ENCODE measurements at regions of chr6 and their contacts with region 1.

Region 1: GRCh38 chr6:125779924-125780539 is 10.7 kb upstream of the NCOA7 start:
- DNase-seq: peak; percentile 95
- ATAC-seq: peak; percentile 83
- H3K4me3 ChIP-seq: peak overlapping the region; percentile 67 to 100 (median 84)
- H3K4me3 Mint-ChIP-seq: no peak overlapping the region
- H3K27ac ChIP-seq: peak overlapping the region; percentile 81 to 95
- H3K27ac Mint-ChIP-seq: no peak overlapping the region
- H3K4me1 ChIP-seq: peaks cover 5 to 6% of the 10 kb centered on the region in 2 donors
- H3K4me1 Mint-ChIP-seq: peaks cover 11% of the 10 kb centered on the region
- H3K27me3 ChIP-seq: no peaks in the 10 kb centered on the region
- H3K27me3 Mint-ChIP-seq: peaks cover 5% of the 10 kb centered on the region
- CTCF ChIP-seq: peak; percentile 37

Region 2: GRCh38 chr6:125623085-125623484 is 156.9 kb before region 1 on chr6:
- CTCF ChIA-PET with region 1: no interaction called
- POLR2A ChIA-PET with region 1: no interaction called
- intact Hi-C with region 1: no loop called
- DNase-seq: no peak
- ATAC-seq: no peak
- H3K4me3 ChIP-seq: no peak overlapping the region
- H3K4me3 Mint-ChIP-seq: no peak overlapping the region
- H3K27ac ChIP-seq: no peak overlapping the region
- H3K27ac Mint-ChIP-seq: no peak overlapping the region
- H3K4me1 ChIP-seq: no peaks in the 10 kb centered on the region
- H3K4me1 Mint-ChIP-seq: no peaks in the 10 kb centered on the region
- H3K27me3 ChIP-seq: peaks cover 0 to 3% (median 0%) of the 10 kb centered on the region in 4 experiments
- H3K27me3 Mint-ChIP-seq: peaks cover 39% of the 10 kb centered on the region
- CTCF ChIP-seq: no peak

Region 3: DNA sequence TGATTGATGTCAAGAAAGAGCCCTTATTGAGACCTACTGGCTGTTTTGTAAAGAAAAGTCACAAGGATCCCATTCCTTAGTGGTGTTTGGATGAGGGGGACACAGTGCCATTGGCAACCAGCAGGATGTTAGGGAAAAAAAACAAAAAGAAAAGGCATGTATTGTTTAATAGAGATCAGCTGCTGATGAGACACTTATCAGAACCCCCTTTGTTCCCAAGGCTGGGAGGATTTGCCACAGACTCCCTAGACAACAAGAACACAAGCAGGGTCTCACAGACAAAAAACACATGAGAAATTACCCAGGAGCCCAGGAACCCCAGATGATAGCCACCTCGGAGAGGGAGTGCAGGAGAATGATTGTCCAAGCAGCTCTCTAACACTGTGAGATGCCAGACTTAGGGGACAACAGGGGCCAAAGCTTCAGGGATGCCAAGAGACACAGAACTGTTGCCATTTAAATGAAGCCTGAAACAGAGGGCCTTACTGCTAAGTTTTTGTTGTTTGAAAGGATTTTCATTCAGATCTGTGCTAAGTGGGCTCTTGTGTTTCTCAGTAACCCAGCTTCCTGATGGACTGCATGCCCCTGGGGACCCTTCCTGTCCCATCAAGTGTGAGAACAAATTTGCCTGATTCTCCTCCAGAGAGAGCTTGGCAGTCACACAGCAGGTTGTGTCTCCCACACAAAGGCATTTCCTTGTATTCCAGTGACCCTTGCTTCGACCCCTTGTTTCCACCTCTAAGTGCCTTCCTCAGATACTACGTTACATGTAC is 79.3 kb before region 1 on chr6:
- CTCF ChIA-PET with region 1: no interaction called
- POLR2A ChIA-PET with region 1: no interaction called
- intact Hi-C with region 1: no loop called
- DNase-seq: no peak
- ATAC-seq: no peak
- H3K4me3 ChIP-seq: no peak overlapping the region
- H3K4me3 Mint-ChIP-seq: no peak overlapping the region
- H3K27ac ChIP-seq: no peak overlapping the region
- H3K27ac Mint-ChIP-seq: no peak overlapping the region
- H3K4me1 ChIP-seq: peaks cover 0 to 3% of the 10 kb centered on the region in 2 donors
- H3K4me1 Mint-ChIP-seq: peaks cover 4% of the 10 kb centered on the region
- H3K27me3 ChIP-seq: no peaks in the 10 kb centered on the region
- H3K27me3 Mint-ChIP-seq: peaks cover 6% of the 10 kb centered on the region
- CTCF ChIP-seq: no peak

Region 4: DNA sequence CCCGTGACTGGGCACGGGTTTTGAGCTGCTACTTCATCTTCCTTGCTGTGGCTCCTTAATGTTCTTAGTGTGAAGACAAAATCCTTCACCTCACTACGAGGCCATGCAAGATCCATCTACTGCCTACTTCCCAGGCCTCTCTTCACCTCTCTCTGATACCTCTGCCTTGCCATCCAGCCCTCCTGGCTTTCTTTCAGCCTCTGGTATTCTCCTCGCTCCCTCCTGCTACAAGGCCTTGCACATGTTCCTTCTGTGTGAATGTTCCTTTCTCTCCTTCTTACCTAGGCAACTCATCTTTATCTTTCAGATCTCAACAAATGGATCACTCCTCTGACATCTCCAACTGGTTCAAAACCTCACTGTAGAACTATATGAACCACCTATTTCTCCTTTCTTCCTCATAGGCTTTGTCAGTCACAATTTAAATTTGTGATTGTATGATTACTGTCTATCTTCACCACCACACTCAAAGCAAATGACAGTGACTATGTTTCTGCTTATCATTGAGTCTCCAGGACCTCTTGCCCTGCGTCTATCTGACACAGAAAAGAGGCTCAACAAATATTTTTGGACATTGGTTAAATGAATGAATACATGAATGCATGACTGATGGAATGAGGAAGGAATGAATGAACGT is 10.8 kb before region 1 on chr6:
- CTCF ChIA-PET with region 1: interaction called, 13 read pairs
- POLR2A ChIA-PET with region 1: no interaction called
- intact Hi-C with region 1: no loop called
- DNase-seq: no peak
- ATAC-seq: no peak
- H3K4me3 ChIP-seq: no peak overlapping the region
- H3K4me3 Mint-ChIP-seq: no peak overlapping the region
- H3K27ac ChIP-seq: no peak overlapping the region
- H3K27ac Mint-ChIP-seq: no peak overlapping the region
- H3K4me1 ChIP-seq: no peaks in the 10 kb centered on the region
- H3K4me1 Mint-ChIP-seq: no peaks in the 10 kb centered on the region
- H3K27me3 ChIP-seq: peaks cover 0 to 10% (median 6%) of the 10 kb centered on the region in 4 experiments
- H3K27me3 Mint-ChIP-seq: peaks cover 46% of the 10 kb centered on the region
- CTCF ChIP-seq: no peak

Region 5: GRCh38 chr6:125798734-125799508 is 18.9 kb after region 1 on chr6:
- CTCF ChIA-PET with region 1: interaction called, 8 read pairs
- POLR2A ChIA-PET with region 1: no interaction called
- intact Hi-C with region 1: loop called (anchors 2 kb)
- DNase-seq: peak; percentile 78
- ATAC-seq: peak; percentile 86
- H3K4me3 ChIP-seq: peak overlapping the region in 1 of 5 experiments; percentile 32
- H3K4me3 Mint-ChIP-seq: peak overlapping the region; percentile 60
- H3K27ac ChIP-seq: peak overlapping the region in 1 of 2 donors; percentile 36
- H3K27ac Mint-ChIP-seq: peak overlapping the region; percentile 80
- H3K4me1 ChIP-seq: peaks cover 26 to 50% of the 10 kb centered on the region in 2 donors
- H3K4me1 Mint-ChIP-seq: peaks cover 55% of the 10 kb centered on the region
- H3K27me3 ChIP-seq: peaks cover 0 to 4% (median 0%) of the 10 kb centered on the region in 4 experiments
- H3K27me3 Mint-ChIP-seq: peaks cover 3% of the 10 kb centered on the region
- CTCF ChIP-seq: no peak

Region 6: GRCh38 chr6:125829433-125829832 is 49.4 kb after region 1 on chr6:
- CTCF ChIA-PET with region 1: no interaction called
- POLR2A ChIA-PET with region 1: no interaction called
- intact Hi-C with region 1: no loop called
- DNase-seq: no peak
- ATAC-seq: no peak
- H3K4me3 ChIP-seq: no peak overlapping the region
- H3K4me3 Mint-ChIP-seq: no peak overlapping the region
- H3K27ac ChIP-seq: no peak overlapping the region
- H3K27ac Mint-ChIP-seq: no peak overlapping the region
- H3K4me1 ChIP-seq: no peaks in the 10 kb centered on the region
- H3K4me1 Mint-ChIP-seq: peaks cover 33% of the 10 kb centered on the region
- H3K27me3 ChIP-seq: no peaks in the 10 kb centered on the region
- H3K27me3 Mint-ChIP-seq: no peaks in the 10 kb centered on the region
- CTCF ChIP-seq: no peak